Mammary epithelial cell (primary cell): ENCODE measurements at regions of chr14 and their contacts with region 1.

Region 1: GRCh38 chr14:91047174-91047753 is 13.2 kb downstream of the RPS6KA5 start:
- DNase-seq: no peak
- H3K4me3 ChIP-seq: no peak overlapping the region
- H3K27ac ChIP-seq: no peak overlapping the region
- H3K4me1 ChIP-seq: no peaks in the 10 kb centered on the region
- H3K27me3 ChIP-seq: no peaks in the 10 kb centered on the region
- CTCF ChIP-seq: no peak

Region 2: GRCh38 chr14:91149479-91149921 is 102.2 kb after region 1 on chr14:
- CTCF ChIA-PET with region 1: no interaction called
- dilution Hi-C with region 1: loop called (anchors 5 kb)
- in situ Hi-C with region 1: no loop called
- intact Hi-C with region 1: no loop called
- DNase-seq: peak; percentile 98
- H3K4me3 ChIP-seq: no peak overlapping the region
- H3K27ac ChIP-seq: peak overlapping the region; percentile 42
- H3K4me1 ChIP-seq: peaks cover 12% of the 10 kb centered on the region
- H3K27me3 ChIP-seq: no peaks in the 10 kb centered on the region
- CTCF ChIP-seq: no peak

Region 3: DNA sequence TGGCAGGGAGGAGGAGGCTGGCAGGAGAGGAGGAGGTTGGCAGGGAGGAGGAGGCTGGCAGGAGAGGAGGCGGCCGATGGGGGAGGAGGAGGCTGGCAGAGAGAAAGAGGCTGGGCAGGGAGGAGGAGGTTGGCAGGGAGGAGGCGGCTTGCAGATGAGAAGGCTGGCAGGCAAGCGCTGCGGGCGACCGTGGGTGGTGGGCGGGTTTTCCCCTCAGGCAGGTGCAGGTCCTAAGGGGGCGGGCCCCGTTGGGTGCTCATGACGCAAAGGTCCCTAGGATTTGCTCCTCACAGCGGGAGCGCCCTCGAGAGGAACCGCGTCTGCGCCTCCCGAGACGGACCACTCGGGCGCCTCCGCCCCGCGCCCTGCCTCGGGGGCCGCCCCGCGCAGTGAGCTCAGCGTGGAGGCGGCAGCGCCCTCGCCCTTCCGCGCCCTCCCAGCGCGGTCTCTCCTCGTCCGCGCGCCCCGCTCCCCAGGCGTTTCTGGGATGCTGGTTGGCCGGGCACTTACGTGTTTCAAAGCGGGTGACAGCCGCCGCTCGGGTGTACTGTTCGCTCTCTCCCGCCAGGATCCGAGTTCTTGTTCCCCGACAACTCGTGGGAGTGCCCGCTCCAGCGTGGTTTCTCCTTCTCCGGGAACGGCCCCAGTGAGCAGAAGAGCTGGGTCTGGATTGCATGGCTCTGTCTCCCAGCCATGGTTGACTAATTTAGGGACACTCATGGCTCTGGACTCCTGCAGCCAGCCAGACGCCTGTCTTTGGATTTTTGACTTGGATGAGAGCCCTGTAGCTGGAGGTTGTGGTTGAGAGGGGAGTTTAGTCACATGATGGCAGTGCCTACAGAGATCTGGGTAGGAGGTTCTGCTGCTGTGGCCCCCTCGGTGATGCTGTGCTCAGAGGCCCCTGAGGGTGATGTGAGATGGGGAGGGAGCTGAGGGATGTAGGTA is 526.9 kb after region 1 on chr14:
- CTCF ChIA-PET with region 1: no interaction called
- dilution Hi-C with region 1: no loop called
- in situ Hi-C with region 1: no loop called
- intact Hi-C with region 1: no loop called
- DNase-seq: peak; percentile 61
- H3K4me3 ChIP-seq: peak overlapping the region; percentile 17 to 48 (median 46)
- H3K27ac ChIP-seq: no peak overlapping the region
- H3K4me1 ChIP-seq: peaks cover 7% of the 10 kb centered on the region
- H3K27me3 ChIP-seq: peaks cover 3% of the 10 kb centered on the region
- CTCF ChIP-seq: no peak